Naive thymus-derived CD8-positive, alpha-beta T cell (primary cell): ENCODE measurements at regions of chr14 and their contacts with region 1.

Region 1: DNA sequence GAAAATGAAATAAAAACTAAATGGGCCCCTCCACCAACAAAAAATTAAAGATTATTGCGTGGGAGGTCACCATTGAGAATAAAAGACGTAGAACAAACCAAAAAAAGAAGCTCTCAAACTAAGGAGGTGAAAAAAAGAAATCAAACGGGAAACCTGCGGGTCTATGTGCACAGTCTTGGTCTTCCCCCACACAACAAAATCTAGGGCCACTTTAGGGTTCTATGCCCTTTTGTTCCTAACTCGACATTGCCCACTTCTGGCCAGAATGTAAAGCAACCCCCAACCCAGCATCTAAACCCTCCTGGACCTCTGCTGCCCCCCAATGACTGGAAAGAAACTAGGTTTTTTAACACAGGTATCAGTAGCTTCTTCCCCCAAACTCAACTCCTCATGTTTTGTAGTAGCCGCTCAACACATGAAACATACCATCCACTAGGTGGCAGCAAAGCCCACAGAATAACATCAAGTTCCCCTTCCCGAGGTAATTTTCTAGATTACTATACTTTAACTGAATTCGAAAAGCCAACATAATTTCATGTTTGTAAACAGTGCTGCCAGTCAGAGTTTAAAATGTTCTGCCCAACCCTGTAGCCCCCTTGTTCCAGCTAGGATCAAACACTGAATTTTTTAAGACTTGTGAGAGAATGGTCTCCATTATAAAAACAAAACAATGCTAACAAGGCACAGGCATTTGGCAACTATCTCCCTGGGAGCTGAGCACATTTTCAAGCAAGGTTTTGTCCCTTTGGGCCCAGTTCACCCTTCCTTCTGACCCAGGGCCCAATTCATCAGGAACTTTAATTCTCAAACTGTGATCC is 18.7 kb downstream of the DAD1 start:
- DNase-seq: peak; percentile 54 to 97 (median 92)
- ATAC-seq: peak; percentile 82 to 91
- H3K4me3 Mint-ChIP-seq: peak overlapping the region; percentile 61 to 89 (median 82)
- H3K27ac Mint-ChIP-seq: peak overlapping the region; percentile 95 to 100 (median 99)
- H3K4me1 Mint-ChIP-seq: peaks cover 28 to 60% (median 52%) of the 10 kb centered on the region in 4 donors
- H3K27me3 Mint-ChIP-seq: no peaks in the 10 kb centered on the region

Region 2: DNA sequence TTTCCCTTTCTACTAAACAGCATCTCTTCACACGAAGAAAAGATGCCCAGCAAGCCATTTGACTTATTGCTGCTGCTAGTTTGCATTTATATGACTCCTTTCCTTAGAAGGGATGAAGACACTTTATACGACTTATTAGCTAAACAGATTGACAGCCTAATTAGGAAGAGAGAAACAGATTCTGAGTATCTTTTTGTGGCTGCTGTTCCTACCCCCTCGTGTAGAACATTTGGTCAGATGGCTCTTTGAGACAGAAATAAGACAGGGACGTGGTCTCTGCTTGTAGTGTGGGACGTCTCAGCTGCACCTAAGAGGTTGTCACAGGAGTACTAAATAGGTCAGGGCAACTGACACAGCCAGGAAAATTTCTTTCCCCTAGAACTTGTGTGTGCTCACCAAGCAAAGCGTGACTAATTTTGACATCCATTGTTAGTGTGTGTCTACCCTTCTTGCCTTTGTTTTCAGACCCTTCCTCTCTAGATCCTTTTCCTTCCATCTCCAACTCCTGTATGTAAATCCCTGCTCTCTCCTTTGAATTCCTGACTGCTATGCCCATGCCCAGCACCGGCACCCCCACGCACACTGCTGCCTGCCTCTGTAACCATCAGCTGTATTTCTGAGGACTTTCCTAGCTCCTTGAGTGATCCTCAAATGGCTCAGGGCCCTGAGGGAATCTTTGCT is 64.5 kb before region 1 on chr14:
- POLR2A ChIA-PET with region 1: interaction called, 13 read pairs
- DNase-seq: peak in 1 of 10 donors; percentile 26
- ATAC-seq: peak in 1 of 2 donors; percentile 38
- H3K4me3 Mint-ChIP-seq: peak overlapping the region; percentile 79 to 94 (median 86)
- H3K27ac Mint-ChIP-seq: peak overlapping the region; percentile 86 to 99 (median 98)
- H3K4me1 Mint-ChIP-seq: peaks cover 13 to 69% (median 57%) of the 10 kb centered on the region in 4 donors
- H3K27me3 Mint-ChIP-seq: no peaks in the 10 kb centered on the region

Region 3: GRCh38 chr14:22549981-22550673 is 20.2 kb before region 1 on chr14:
- POLR2A ChIA-PET with region 1: interaction called, 249 read pairs
- DNase-seq: peak in 9 of 10 donors; percentile 50 to 85 (median 62)
- ATAC-seq: peak; percentile 58 to 61
- H3K4me3 Mint-ChIP-seq: peak overlapping the region; percentile 73 to 92 (median 83)
- H3K27ac Mint-ChIP-seq: peak overlapping the region; percentile 96 to 100 (median 97)
- H3K4me1 Mint-ChIP-seq: peaks cover 50 to 97% (median 95%) of the 10 kb centered on the region in 4 donors
- H3K27me3 Mint-ChIP-seq: no peaks in the 10 kb centered on the region

Region 4: GRCh38 chr14:22598099-22598899 is 28.0 kb after region 1 on chr14 and contains the start of gene ABHD4:
- POLR2A ChIA-PET with region 1: interaction called, 33 read pairs
- DNase-seq: peak; percentile 24 to 80 (median 62)
- ATAC-seq: peak; percentile 77 to 88
- H3K4me3 Mint-ChIP-seq: peak within 1 kb of the TSS; percentile 91 to 99 (median 96)
- H3K27ac Mint-ChIP-seq: peak within 1 kb of the TSS; percentile 89 to 97 (median 96)
- H3K4me1 Mint-ChIP-seq: peaks cover 18 to 49% (median 40%) of the 10 kb centered on the region in 4 donors
- H3K27me3 Mint-ChIP-seq: no peaks in the 10 kb centered on the region
- polyA plus RNA-seq, gene ABHD4: 8.7 to 11.9 (median 11.1) TPM

Region 5: DNA sequence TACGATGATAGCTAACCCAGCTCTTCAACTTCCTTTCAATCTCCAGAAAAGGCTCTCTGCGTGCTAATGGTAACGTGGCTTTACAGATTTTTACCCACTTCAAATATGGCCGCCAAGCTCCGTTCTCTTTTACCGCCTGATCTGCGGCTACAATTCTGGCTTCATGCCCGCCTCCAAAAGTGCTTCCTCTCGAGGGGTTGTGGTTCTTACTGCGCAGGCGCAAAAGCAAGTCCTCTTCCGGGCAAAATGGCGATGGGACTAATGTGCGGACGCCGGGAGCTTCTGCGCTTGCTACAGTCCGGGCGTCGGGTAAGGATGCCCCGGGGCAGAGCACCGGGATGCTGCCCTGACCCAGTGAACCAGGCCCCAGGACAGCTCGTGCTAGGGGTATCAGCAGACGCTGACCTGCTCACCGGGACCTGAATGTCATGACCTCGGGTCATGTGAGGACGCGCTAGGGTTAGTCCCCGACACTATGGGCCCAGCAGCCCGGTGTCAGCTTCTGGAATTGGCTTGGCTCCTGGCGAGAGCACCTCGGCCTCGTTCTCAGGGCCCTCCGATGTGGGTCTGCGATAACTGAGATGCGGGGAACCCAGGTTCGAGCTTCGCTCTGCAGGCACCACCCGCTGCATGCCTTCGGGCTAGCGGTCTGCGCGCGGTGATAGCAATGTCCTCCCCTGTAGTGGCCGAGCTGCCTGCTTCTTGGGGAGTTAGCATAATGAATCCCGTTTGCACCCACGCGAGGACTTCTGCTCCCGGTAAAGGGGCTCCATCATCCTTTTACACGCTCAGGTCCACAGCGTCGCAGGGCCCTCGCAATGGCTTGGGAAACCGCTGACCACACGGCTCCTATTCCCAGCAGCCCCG is 196.3 kb after region 1 on chr14 and contains the start of gene OXA1L:
- POLR2A ChIA-PET with region 1: interaction called, 10 read pairs
- DNase-seq: peak; percentile 84 to 99 (median 96)
- ATAC-seq: peak; percentile 92 to 93
- H3K4me3 Mint-ChIP-seq: peak within 1 kb of the TSS; percentile 86 to 97 (median 91)
- H3K27ac Mint-ChIP-seq: peak within 1 kb of the TSS; percentile 94 to 98 (median 98)
- H3K4me1 Mint-ChIP-seq: peaks cover 21 to 36% (median 33%) of the 10 kb centered on the region in 4 donors
- H3K27me3 Mint-ChIP-seq: no peaks in the 10 kb centered on the region
- polyA plus RNA-seq, gene OXA1L: 56.3 to 67.4 (median 57.1) TPM

Region 6: DNA sequence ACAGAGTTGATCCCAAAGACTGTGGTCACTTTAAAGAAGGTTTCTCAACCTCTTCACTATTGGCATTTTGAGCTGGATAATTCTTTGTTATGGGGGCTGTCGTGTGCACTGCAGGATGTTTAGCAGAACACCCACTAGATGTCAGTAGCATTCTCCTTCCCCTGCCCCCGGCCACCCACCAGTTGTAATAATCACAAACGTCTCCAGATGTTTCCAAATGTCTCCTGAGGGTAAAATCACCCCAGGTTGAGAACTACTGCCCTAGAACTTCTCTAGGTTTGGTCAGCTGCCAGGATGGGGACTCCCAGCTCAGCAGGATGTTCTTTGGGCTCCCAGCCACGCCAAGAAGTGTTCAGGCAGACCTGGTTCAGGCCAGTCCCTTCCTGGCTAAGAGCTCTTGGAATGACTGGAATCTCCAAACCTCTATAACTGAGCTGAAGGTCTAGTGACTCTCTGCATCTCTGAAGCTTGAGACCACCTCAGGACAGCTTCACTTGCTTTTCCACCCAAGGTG is 424.5 kb after region 1 on chr14:
- POLR2A ChIA-PET with region 1: no interaction called
- DNase-seq: peak in 5 of 10 donors; percentile 37 to 70 (median 55)
- ATAC-seq: peak; percentile 88 to 96
- H3K4me3 Mint-ChIP-seq: no peak overlapping the region
- H3K27ac Mint-ChIP-seq: peak overlapping the region in 1 of 10 donors; percentile 9
- H3K4me1 Mint-ChIP-seq: peaks cover 0 to 3% (median under 1%) of the 10 kb centered on the region in 4 donors
- H3K27me3 Mint-ChIP-seq: no peaks in the 10 kb centered on the region